ENCODE measurements at regions of chr5 and their contacts with region 1.

Region 1: DNA sequence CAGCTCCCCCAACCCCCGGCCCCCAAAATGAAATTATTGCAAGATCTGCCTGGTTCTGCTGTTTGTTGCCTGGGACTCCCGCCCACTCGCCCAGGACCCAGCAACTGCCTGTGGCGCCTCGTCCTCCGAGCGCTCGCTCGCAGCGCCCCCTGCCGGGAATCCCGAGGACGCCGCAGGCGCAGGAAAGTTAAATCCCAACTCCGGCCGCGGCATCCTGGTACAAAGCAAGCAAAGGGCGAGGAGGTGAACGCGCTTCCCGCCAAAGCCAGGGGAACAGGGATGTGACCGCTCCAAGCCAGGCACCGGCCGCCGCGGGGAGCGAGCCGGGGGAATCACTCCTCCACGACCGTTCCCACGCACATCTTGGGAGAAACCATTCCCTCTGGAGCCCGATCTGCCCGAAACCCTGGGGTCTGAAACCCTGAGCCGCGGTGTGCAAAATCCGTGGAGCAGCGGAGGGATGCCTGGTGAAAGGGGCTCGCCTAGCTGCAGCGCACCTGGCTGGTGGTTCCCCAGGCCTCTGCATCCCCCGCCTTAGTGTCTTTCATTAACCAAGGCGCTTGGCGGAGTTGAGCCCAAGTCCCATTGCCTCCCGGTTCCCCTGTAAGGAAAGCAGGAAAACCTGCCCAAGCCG is 1.3 kb downstream of the SEMA5A start:
- DNase-seq: peak; percentile 93
- H3K4me3 ChIP-seq: peak overlapping the region; percentile 84
- H3K27ac ChIP-seq: peak overlapping the region; percentile 69
- H3K4me1 ChIP-seq: peaks cover 27% of the 10 kb centered on the region
- H3K27me3 ChIP-seq: no peaks in the 10 kb centered on the region

Region 2: GRCh38 chr5:10145923-10146401 is 601.3 kb after region 1 on chr5:
- in situ Hi-C with region 1: loop called (anchors 10 kb)
- DNase-seq: peak; percentile 71
- H3K4me3 ChIP-seq: no peak overlapping the region
- H3K27ac ChIP-seq: no peak overlapping the region
- H3K4me1 ChIP-seq: no peaks in the 10 kb centered on the region
- H3K27me3 ChIP-seq: no peaks in the 10 kb centered on the region